Posterior cingulate gyrus (tissue), 11 donors: ENCODE measurements at regions of chr21 and their contacts with region 1.

Region 1: GRCh38 chr21:17679002-17679600 is 66.4 kb upstream of the BTG3 start:
- DNase-seq: no peak

Region 2: DNA sequence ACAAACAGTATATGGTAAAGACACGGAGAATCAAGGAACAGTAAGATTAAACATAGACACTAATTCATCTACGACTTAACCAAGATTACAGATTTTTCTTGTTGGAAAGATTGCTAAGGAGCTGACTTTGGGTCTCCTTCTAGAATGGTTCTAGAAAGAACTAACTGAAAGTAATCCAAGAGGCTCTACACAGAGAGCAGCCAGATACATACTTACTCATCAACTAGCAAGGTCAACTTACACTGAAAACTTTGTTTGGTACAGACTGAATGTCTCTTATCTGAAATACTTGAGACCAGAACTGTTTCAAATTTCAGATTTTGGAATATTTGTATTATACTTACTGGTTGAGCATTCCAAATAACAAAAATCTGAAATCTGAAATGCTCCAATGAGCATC is 134.3 kb after region 1 on chr21:
- intact Hi-C with region 1: loop called (anchors 5 kb)
- DNase-seq: no peak

Region 3: GRCh38 chr21:17903029-17903806 is 224.1 kb after region 1 on chr21:
- intact Hi-C with region 1: loop called (anchors 1 kb)
- DNase-seq: no peak

Region 4: DNA sequence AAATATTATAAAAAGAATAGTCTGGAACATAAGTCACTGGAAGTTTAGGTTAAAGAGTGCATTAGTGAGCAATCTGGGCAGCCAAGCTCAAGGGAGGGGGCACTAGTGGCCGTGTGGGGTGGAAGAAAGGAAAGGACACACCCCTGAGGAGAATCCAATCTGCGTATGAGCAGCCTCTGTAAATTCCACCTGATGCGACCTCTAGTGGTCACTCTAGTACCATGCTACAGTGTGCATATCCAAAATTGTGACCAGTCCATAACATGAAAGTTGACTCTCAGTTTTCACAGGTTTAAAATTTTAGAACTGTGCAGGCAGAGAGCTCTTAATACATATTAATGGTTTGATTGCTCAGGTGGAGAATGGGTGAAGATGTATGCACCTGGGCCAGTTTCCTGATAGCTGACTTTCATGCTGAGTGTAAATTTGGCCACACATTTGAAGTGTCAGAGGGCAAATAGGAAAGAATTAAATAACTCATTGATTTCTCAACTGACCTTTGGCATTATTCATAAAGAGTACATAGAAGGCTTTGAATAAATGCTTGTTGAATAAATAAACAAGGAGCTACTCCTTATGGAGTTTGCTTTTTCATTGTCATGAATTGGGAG is 246.0 kb after region 1 on chr21:
- intact Hi-C with region 1: loop called (anchors 1 kb)
- DNase-seq: peak in 3 of 10 donors; percentile 23 to 50 (median 31)